HEK293 (cell line): ENCODE measurements at regions of chr5 and their contacts with region 1.

Region 1: DNA sequence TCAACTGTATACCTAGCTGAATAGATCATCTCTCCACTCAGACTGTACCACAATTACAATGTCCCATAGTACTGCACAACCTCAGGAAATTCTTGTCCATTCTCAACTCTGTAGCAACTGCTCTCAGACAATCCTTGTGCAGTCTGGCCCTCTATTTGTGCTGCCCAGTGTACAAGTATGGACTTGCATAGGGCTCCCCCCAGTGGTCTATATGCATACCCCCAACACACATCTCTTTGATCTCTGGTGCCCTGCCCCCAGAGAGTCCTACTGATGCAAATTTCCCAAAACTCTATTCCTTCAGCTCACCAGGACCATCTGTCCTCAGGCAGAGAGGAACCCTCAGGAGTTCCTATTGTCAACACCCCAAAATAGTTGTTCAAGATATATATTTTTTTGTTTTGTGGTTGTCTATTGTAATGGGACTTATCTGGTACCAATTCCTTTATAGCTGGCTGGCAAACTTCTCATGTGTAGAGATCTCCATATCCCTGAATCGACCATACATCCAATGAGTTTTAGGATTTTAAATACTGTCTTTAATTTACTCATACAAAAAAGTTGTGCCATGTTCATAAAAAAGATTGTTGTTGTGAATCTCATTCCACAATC is 205.2 kb downstream of the SLCO4C1 start:
- H3K4me3 ChIP-seq: no peak overlapping the region
- H3K27ac ChIP-seq: no peak overlapping the region
- H3K4me1 ChIP-seq: no peaks in the 10 kb centered on the region
- CTCF ChIP-seq: peak; percentile 49

Region 2: DNA sequence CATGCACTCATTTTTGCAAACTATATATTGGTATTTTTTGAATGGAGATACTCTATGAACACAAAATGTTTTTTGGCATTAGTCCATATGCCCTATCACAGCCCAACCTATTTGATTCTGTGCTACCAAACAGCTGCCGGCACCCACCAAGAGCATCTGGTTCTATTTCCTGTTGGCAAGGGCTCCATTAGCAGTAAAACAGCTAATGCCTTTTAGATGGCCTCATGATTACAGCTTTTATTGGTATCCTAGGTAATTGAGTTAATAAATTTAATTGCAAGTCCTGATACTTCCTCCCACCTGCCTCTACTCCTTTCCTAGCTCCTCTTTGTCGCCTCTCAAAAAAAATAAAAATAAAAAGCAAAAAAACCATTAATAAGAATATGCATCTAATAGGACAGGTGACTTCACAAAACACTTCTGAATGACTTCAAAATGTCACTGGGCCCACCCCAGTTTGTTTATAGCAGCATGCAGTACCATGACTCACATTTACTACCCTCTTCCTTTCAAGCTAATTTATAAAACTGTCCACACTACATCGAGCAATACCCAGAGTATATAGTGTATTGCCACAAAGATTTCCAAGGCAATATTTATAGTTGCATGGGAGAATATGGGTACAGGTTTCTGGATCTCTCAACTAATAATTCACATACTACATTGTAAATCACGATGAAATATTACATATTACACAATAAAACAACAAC is 415.2 kb before region 1 on chr5:
- CTCF ChIA-PET with region 1: no interaction called
- POLR2A ChIA-PET with region 1: no interaction called
- H3K4me3 ChIP-seq: no peak overlapping the region
- H3K27ac ChIP-seq: no peak overlapping the region
- H3K4me1 ChIP-seq: no peaks in the 10 kb centered on the region
- CTCF ChIP-seq: no peak

Region 3: GRCh38 chr5:101977729-101978345 is 113.0 kb before region 1 on chr5:
- CTCF ChIA-PET with region 1: interaction called, 10 read pairs
- POLR2A ChIA-PET with region 1: no interaction called
- H3K4me3 ChIP-seq: no peak overlapping the region
- H3K27ac ChIP-seq: no peak overlapping the region
- H3K4me1 ChIP-seq: no peaks in the 10 kb centered on the region
- CTCF ChIP-seq: no peak